ENCODE measurements at regions of chr17 and their contacts with region 1.

Region 1: GRCh38 chr17:29241015-29241963 is 5.4 kb upstream of the CRYBA1 start:
- DNase-seq: peak; percentile 86
- H3K4me3 ChIP-seq: no peak overlapping the region
- H3K27ac ChIP-seq: peak overlapping the region; percentile 92
- H3K27me3 ChIP-seq: no peaks in the 10 kb centered on the region
- CTCF ChIP-seq: peak; percentile 8; the same call in 1 of the 2 replicates

Region 2: GRCh38 chr17:29252101-29252866 is 11.0 kb after region 1 on chr17:
- CTCF ChIA-PET with region 1: interaction called, 21 read pairs
- POLR2A ChIA-PET with region 1: interaction called, 19 read pairs
- DNase-seq: no peak
- H3K4me3 ChIP-seq: no peak overlapping the region
- H3K27ac ChIP-seq: peak overlapping the region; percentile 22
- H3K27me3 ChIP-seq: no peaks in the 10 kb centered on the region
- CTCF ChIP-seq: peak; percentile 56

Measured in AG04450 (cell line).